ENCODE measurements at regions of chr17 and their contacts with region 1.

Region 1: GRCh38 chr17:47840740-47841603 is at the start of gene SCRN2:
- DNase-seq: peak; percentile 68
- ATAC-seq: peak; percentile 95
- H3K4me3 ChIP-seq: peak within 1 kb of the TSS; percentile 57
- H3K27ac ChIP-seq: peak within 1 kb of the TSS; percentile 49
- H3K4me1 ChIP-seq: peaks cover 8% of the 10 kb centered on the region
- H3K27me3 ChIP-seq: peaks cover 11% of the 10 kb centered on the region
- CTCF ChIP-seq: peak; percentile 95
- POLR2A ChIP-seq: no peak
- RAD21 ChIP-seq: peak; percentile 95
- total RNA-seq, gene SCRN2: 14.7 and 17.2 TPM in 2 replicates

Region 2: DNA sequence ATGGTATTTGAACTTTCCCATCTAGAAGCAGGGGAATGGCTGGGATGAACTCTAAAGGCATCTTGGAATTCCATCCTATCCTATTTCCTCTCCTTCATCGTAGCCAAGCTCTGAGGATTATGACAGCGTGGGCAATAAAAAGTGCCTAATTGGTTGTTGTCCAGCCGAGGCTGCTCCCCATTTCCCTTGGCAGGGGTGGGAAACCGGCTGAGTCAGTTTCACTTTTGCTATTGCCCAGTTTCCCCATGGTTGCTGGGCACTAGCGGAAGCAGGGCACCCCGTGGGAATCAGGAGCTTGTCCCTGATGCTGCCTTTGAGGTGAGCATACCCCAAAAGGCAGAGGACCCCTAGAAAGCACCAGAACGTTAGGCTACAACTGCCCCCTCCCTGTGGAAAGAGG is 41.3 kb after region 1 on chr17:
- CTCF ChIA-PET with region 1: interaction called, 18 read pairs
- POLR2A ChIA-PET with region 1: no interaction called
- dilution Hi-C with region 1: no loop called
- in situ Hi-C with region 1: no loop called
- intact Hi-C with region 1: no loop called
- DNase-seq: peak; percentile 32
- ATAC-seq: peak; percentile 46
- H3K4me3 ChIP-seq: no peak overlapping the region
- H3K27ac ChIP-seq: no peak overlapping the region
- H3K4me1 ChIP-seq: peaks cover 9% of the 10 kb centered on the region
- H3K27me3 ChIP-seq: peaks cover 8% of the 10 kb centered on the region
- CTCF ChIP-seq: no peak
- POLR2A ChIP-seq: no peak
- RAD21 ChIP-seq: no peak

Region 3: DNA sequence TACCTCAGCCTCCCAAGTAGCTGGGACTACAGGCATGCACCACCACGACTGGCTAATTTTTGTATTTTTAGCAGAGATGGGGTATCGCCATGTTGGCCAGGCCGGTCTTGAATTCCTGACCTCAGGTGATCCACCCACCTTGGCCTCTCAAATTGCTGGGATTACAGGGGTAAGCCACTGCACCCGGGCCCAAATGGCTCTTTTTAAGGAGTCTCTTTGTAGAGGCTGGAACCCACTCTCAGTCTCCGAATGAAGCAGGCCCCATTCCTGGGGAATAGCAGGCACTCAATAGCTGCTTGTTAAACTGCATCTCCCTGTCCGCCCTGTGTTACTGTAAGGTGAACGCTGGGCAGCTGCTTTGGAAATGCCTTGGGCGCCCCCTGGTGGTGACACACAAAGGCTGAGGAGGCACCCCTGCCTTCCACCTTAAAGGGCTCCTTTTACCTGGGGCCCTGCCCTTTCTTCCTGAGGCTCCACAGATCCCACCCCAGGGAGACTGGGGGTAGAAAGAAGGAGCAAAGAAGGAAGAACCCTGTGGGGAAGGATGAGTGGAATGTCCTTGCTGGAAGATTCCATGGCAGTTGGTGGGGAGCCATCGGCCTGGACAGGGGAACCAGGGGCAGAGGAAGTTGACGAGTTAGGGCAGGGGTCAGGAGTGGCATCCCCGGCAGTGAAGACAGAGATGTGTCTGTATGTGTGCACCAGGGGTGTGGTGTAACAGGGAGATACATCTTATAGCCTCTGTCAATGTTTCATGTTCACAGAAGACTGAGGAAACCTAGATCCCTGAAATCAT is 49.0 kb after region 1 on chr17:
- CTCF ChIA-PET with region 1: interaction called, 47 read pairs
- POLR2A ChIA-PET with region 1: interaction called, 3 read pairs
- dilution Hi-C with region 1: no loop called
- in situ Hi-C with region 1: loop called (anchors 5 kb)
- intact Hi-C with region 1: loop called (anchors 1 kb)
- DNase-seq: peak; percentile 77
- ATAC-seq: peak; percentile 99
- H3K4me3 ChIP-seq: no peak overlapping the region
- H3K27ac ChIP-seq: no peak overlapping the region
- H3K4me1 ChIP-seq: no peaks in the 10 kb centered on the region
- H3K27me3 ChIP-seq: peaks cover under 1% of the 10 kb centered on the region; the same call in 1 of the 2 replicates
- CTCF ChIP-seq: peak; percentile 96
- POLR2A ChIP-seq: peak; percentile 54
- RAD21 ChIP-seq: peak; percentile 99

Region 4: GRCh38 chr17:47895856-47896671 is 55.1 kb after region 1 on chr17 and contains the start of gene SP2:
- CTCF ChIA-PET with region 1: interaction called, 47 read pairs
- POLR2A ChIA-PET with region 1: interaction called, 3 read pairs
- dilution Hi-C with region 1: no loop called
- in situ Hi-C with region 1: loop called (anchors 5 kb)
- intact Hi-C with region 1: no loop called
- DNase-seq: peak; percentile 100
- ATAC-seq: peak; percentile 92
- H3K4me3 ChIP-seq: peak within 1 kb of the TSS; percentile 97
- H3K27ac ChIP-seq: peak within 1 kb of the TSS; percentile 94
- H3K4me1 ChIP-seq: peaks cover 1% of the 10 kb centered on the region; the same call in 1 of the 2 replicates
- H3K27me3 ChIP-seq: no peaks in the 10 kb centered on the region
- CTCF ChIP-seq: no peak
- POLR2A ChIP-seq: peak; percentile 82
- RAD21 ChIP-seq: no peak
- total RNA-seq, gene SP2: 0.72 and 1.4 TPM in 2 replicates

Region 5: DNA sequence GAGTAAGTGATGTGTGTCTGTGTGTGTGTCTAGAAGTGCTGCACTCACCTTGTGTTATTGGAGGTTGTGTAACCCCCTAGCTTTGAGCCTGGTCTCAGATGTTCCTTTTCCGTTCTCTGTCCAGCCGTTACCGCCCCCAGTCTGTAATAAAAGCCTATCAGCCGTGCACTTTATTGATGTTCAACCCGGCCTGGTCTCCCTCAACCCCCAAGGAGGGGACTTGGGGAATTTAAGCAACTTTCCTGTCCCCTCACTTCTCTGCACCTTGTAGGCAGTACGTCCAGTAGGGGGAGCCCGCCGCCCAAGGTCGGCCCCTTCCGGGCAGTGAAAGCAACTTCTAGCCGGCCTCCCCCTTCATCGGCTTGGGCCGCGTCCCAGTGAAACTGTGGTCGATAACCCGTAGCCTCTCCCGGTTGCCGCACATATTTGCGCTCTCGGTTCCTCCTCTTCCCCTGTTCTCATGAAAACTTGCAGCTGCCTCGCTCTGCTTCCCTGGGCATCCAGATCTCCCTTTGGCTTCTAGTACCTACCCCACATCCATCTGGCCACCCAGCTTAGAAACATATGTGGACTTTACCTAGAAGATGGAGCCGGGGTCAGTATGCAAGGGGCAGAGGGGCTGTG is 108.3 kb after region 1 on chr17:
- CTCF ChIA-PET with region 1: interaction called, 4 read pairs
- POLR2A ChIA-PET with region 1: no interaction called
- dilution Hi-C with region 1: no loop called
- in situ Hi-C with region 1: no loop called
- intact Hi-C with region 1: loop called (anchors 5 kb)
- DNase-seq: peak; percentile 82
- ATAC-seq: peak; percentile 96
- H3K4me3 ChIP-seq: peak overlapping the region; percentile 16
- H3K27ac ChIP-seq: peak overlapping the region; percentile 64
- H3K4me1 ChIP-seq: peaks cover 3% of the 10 kb centered on the region
- H3K27me3 ChIP-seq: no peaks in the 10 kb centered on the region
- CTCF ChIP-seq: peak; percentile 94
- POLR2A ChIP-seq: peak; percentile 36; the same call in 1 of the 2 replicates
- RAD21 ChIP-seq: peak; percentile 86

Region 6: DNA sequence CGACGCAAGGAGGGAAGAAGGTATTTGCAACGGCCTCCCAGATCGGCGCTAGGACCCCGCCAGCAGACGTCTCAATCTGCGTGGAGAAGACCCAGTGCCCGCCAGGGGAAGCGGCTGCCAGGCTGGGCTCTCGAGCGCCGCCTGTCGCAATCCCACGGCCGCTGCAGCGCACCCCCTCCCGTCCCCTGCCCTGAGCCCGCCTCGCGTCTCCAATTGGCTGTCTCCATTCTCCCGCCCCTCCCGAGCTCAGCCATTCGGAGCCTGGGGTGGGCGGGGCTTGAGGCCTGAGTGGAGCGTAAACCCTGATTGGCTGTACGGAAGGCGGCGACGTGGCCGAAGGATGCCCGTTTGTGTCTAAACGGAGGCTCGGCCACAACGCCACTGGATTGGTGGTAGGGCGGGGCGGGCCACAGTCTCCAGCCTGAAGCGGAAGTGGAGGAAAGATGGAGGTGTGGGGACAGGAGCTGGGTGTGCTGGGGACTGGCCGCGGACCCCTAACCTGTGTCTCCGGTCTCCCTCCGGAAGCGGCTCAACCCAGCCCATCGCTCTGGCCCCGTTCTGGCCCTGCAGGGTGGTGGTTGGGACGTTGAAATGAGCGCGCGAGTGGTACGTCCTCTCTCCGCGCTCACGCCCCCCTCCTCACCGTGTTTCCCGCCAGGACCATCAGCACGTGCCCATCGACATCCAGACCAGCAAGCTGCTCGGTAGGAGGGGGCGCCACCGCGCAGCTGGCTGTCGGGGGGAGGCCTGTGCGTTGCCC is 129.9 kb after region 1 on chr17 and contains the start of gene CDK5RAP3:
- CTCF ChIA-PET with region 1: interaction called, 3 read pairs
- POLR2A ChIA-PET with region 1: no interaction called
- dilution Hi-C with region 1: no loop called
- in situ Hi-C with region 1: no loop called
- intact Hi-C with region 1: loop called (anchors 1 kb)
- DNase-seq: peak; percentile 99
- ATAC-seq: peak; percentile 98
- H3K4me3 ChIP-seq: peak within 1 kb of the TSS; percentile 82
- H3K27ac ChIP-seq: peak within 1 kb of the TSS; percentile 73
- H3K4me1 ChIP-seq: peaks cover 17% of the 10 kb centered on the region
- H3K27me3 ChIP-seq: no peaks in the 10 kb centered on the region
- CTCF ChIP-seq: peak; percentile 99
- POLR2A ChIP-seq: peak; percentile 87; the same call in 1 of the 2 replicates
- RAD21 ChIP-seq: peak; percentile 74
- total RNA-seq, gene CDK5RAP3: 56.7 and 75.3 TPM in 2 replicates

Region 7: GRCh38 chr17:48016112-48016511 is 175.1 kb after region 1 on chr17:
- CTCF ChIA-PET with region 1: no interaction called
- POLR2A ChIA-PET with region 1: interaction called, 3 read pairs
- dilution Hi-C with region 1: no loop called
- in situ Hi-C with region 1: loop called (anchors 5 kb)
- intact Hi-C with region 1: loop called (anchors 1 kb)
- DNase-seq: peak; percentile 86
- ATAC-seq: peak; percentile 33
- H3K4me3 ChIP-seq: no peak overlapping the region
- H3K27ac ChIP-seq: no peak overlapping the region
- H3K4me1 ChIP-seq: no peaks in the 10 kb centered on the region; the same call in 1 of the 2 replicates
- H3K27me3 ChIP-seq: peaks cover 13% of the 10 kb centered on the region
- CTCF ChIP-seq: no peak; the same call in 1 of the 2 replicates
- POLR2A ChIP-seq: no peak
- RAD21 ChIP-seq: no peak